Activated naive CD8-positive, alpha-beta T cell treated with anti-CD3 and anti-CD28 coated beads, Interleukin-2, amount 10 ng/mL, durations not matched to agents 7 days and 5 days (primary cell): ENCODE measurements at regions of chr17 and their contacts with region 1.

Region 1: DNA sequence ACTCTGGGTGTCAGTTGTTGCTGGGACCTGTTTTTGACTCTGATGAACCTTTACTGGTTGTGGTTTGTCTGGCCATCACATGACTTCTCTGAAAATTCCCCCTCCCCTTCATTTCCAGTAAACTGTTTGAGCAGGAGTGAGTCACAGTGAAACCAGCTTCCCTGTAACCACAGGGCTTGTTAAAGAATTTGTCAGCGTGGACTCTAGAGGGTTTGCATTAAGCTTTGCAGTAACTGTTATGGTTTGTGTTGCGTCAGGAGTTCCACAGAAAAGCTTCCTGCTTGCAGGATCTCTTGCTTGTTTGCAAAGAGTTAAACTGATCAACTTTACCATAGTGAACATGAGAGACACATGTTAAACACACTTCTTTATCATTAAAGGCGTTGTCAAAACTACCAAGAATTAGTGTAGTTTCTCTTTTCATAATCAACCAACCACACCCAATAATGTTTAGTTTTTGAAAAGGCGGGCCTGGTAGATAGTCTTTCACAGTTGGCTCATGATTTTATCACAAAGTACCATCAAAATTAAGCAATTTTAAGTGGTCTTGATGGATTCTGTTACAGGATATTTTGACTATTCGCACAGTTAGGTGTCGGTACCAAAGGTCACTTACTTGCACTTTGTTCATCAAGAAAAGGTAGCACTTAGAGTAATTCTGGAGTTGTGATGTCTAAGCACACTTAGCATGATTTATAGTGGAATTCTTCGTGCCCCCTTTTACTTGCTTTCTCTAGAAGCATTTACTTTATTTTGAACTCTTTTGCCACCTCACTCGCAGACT is 79.3 kb downstream of the VMP1 start:
- DNase-seq: no peak
- ATAC-seq: peak; percentile 88
- H3K4me3 Mint-ChIP-seq: peak overlapping the region; percentile 88
- H3K27ac Mint-ChIP-seq: peak overlapping the region; percentile 94
- H3K4me1 Mint-ChIP-seq: peaks cover 44% of the 10 kb centered on the region
- H3K27me3 Mint-ChIP-seq: no peaks in the 10 kb centered on the region

Region 2: DNA sequence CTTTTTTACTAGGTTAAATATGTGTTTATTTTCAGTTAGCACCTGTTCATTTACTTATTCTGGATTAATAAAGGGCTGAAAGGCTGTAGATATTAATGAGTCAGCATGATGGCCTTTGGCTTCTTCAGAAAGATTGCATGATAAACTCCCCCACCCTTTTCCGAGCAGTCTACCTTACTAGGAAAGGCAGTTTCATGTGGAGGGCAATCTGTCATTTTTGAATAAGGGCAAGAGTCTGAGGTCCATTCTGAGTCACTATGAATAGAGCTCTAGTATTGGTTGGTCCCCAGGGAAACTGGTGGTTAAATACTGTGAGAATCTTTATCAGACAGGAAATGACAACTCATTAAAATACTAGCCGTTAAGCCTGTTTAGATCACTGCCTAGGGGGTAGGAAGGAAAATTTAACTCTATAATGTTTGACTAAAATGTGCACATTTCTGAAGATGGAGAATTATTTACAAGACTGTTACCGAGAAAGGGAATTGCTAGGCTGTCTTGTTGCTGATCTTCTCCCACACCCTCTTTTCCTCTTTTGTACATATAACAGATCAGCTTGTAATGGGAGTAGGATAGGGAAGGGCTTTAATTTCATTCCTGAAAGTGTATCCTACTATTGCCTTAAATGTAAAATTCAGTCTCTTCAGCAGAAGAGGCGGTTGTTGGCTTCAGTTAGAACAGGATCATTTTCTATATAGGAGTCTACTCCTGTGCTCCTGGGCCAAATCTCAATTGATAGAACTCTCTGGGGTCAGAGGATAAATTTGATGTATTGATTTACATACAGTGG is 42.7 kb after region 1 on chr17:
- POLR2A ChIA-PET with region 1: interaction called, 102 read pairs
- DNase-seq: no peak
- ATAC-seq: peak; percentile 88
- H3K4me3 Mint-ChIP-seq: peak overlapping the region; percentile 82
- H3K27ac Mint-ChIP-seq: peak overlapping the region; percentile 96
- H3K4me1 Mint-ChIP-seq: peaks cover 66% of the 10 kb centered on the region
- H3K27me3 Mint-ChIP-seq: no peaks in the 10 kb centered on the region

Region 3: GRCh38 chr17:59837308-59838051 is 50.8 kb after region 1 on chr17:
- POLR2A ChIA-PET with region 1: interaction called, 189 read pairs
- DNase-seq: no peak
- ATAC-seq: peak; percentile 93
- H3K4me3 Mint-ChIP-seq: peak overlapping the region; percentile 90
- H3K27ac Mint-ChIP-seq: peak overlapping the region; percentile 94
- H3K4me1 Mint-ChIP-seq: peaks cover 33% of the 10 kb centered on the region
- H3K27me3 Mint-ChIP-seq: no peaks in the 10 kb centered on the region

Region 4: GRCh38 chr17:59878624-59879023 is 91.9 kb after region 1 on chr17:
- POLR2A ChIA-PET with region 1: no interaction called
- DNase-seq: no peak
- ATAC-seq: no peak
- H3K4me3 Mint-ChIP-seq: no peak overlapping the region
- H3K27ac Mint-ChIP-seq: no peak overlapping the region
- H3K4me1 Mint-ChIP-seq: no peaks in the 10 kb centered on the region
- H3K27me3 Mint-ChIP-seq: no peaks in the 10 kb centered on the region

Region 5: GRCh38 chr17:59892924-59893676 is 106.4 kb after region 1 on chr17 and contains the starts of genes RPS6KB1 and TUBD1:
- POLR2A ChIA-PET with region 1: interaction called, 11 read pairs
- DNase-seq: peak; percentile 90
- ATAC-seq: peak; percentile 98
- H3K4me3 Mint-ChIP-seq: peak within 1 kb of the TSS; percentile 100
- H3K27ac Mint-ChIP-seq: peak within 1 kb of the TSS; percentile 100
- H3K4me1 Mint-ChIP-seq: peaks cover 38% of the 10 kb centered on the region
- H3K27me3 Mint-ChIP-seq: no peaks in the 10 kb centered on the region
- total RNA-seq, gene RPS6KB1: 46.3 to 49.4 TPM
- total RNA-seq, gene TUBD1: 16.5 to 21.1 TPM